Left cardiac atrium (tissue), 4 donors: ENCODE measurements at regions of chr16 and their contacts with region 1.

Region 1: GRCh38 chr16:25322009-25322408 is 64.4 kb upstream of the ZKSCAN2 start:
- DNase-seq: no peak
- ATAC-seq: no peak

Region 2: GRCh38 chr16:25390761-25391160 is 68.8 kb after region 1 on chr16:
- intact Hi-C with region 1: loop called in 1 of 2 experiments (anchors 10 kb)
- DNase-seq: no peak
- ATAC-seq: no peak